GM12878 (cell line): ENCODE measurements at regions of chr2 and their contacts with region 1.

Region 1: GRCh38 chr2:98649135-98649991 is 41.0 kb downstream of the UNC50 start:
- DNase-seq: peak; percentile 54
- ATAC-seq: peak; percentile 97
- H3K4me3 ChIP-seq: no peak overlapping the region
- H3K27ac ChIP-seq: no peak overlapping the region
- H3K4me1 ChIP-seq: peaks cover 6% of the 10 kb centered on the region
- H3K27me3 ChIP-seq: no peaks in the 10 kb centered on the region
- CTCF ChIP-seq: peak; percentile 97 to 99 (median 99)
- EP300 ChIP-seq: no peak
- POLR2A ChIP-seq: no peak
- RAD21 ChIP-seq: peak; percentile 99

Region 2: DNA sequence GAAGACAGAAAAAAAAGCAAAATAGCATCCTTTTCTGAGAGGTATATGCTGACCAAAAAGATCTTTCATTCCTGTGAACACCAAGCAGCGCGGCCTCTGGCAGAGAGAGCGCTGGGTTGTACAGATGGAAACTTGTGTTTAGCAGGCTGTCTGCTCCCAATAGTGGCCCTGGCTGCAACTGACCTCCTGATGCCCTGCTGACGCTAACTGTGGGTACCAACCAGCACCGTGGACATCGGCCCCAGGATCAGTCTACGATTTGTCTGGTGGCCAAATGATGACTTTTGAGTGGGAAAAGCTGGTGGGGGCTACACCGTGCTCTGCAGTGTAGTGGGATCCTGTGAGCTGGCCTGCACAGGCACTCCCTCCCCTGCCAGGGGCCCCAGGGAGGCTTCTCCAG is 56.8 kb before region 1 on chr2:
- CTCF ChIA-PET with region 1: no interaction called
- POLR2A ChIA-PET with region 1: no interaction called
- RAD21 ChIA-PET with region 1: no interaction called
- SMC1A ChIA-PET with region 1: no interaction called
- in situ Hi-C with region 1: no loop called
- intact Hi-C with region 1: no loop called
- DNase-seq: no peak
- ATAC-seq: no peak
- H3K4me3 ChIP-seq: no peak overlapping the region
- H3K27ac ChIP-seq: no peak overlapping the region
- H3K4me1 ChIP-seq: no peaks in the 10 kb centered on the region
- H3K27me3 ChIP-seq: no peaks in the 10 kb centered on the region
- CTCF ChIP-seq: no peak
- EP300 ChIP-seq: no peak
- POLR2A ChIP-seq: no peak
- RAD21 ChIP-seq: no peak

Region 3: GRCh38 chr2:98709535-98709934 is 60.2 kb after region 1 on chr2:
- CTCF ChIA-PET with region 1: interaction called, 4 read pairs
- POLR2A ChIA-PET with region 1: interaction called, 5 read pairs
- RAD21 ChIA-PET with region 1: interaction called, 11 read pairs
- SMC1A ChIA-PET with region 1: interaction called, 4 read pairs
- in situ Hi-C with region 1: no loop called
- intact Hi-C with region 1: no loop called
- DNase-seq: no peak
- ATAC-seq: no peak
- H3K4me3 ChIP-seq: no peak overlapping the region
- H3K27ac ChIP-seq: no peak overlapping the region
- H3K4me1 ChIP-seq: peaks cover 18% of the 10 kb centered on the region
- H3K27me3 ChIP-seq: no peaks in the 10 kb centered on the region
- CTCF ChIP-seq: no peak
- EP300 ChIP-seq: no peak
- POLR2A ChIP-seq: no peak
- RAD21 ChIP-seq: no peak

Region 4: DNA sequence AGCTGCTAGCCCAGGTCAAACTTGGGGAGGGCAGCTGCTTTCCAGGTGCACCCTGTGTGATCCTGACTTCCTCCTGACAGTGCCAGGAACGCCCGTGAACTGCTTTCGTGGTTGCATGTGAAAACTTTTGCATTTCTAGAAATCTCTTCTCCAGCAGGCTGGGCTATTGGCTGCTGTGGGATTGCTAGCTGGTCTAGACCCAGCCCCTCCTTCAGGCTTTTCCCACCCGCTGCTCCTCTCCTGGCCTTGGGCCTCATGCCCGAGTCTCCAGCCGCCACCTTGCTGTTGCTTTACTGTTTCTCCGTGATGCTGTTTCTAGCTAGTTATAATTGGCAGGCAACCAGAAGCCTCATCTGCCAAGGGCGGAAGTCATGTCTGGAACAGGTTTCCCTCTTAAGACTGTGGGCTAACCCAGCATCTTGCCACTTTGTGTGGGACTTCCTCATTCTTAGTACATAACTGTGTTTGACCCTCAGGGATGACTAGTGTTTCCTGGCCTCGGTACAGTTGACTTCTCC is 108.6 kb after region 1 on chr2:
- CTCF ChIA-PET with region 1: interaction called, 9 read pairs
- POLR2A ChIA-PET with region 1: interaction called, 8 read pairs
- RAD21 ChIA-PET with region 1: interaction called, 9 read pairs
- SMC1A ChIA-PET with region 1: interaction called, 12 read pairs
- in situ Hi-C with region 1: no loop called
- intact Hi-C with region 1: no loop called
- DNase-seq: peak; percentile 81
- ATAC-seq: peak; percentile 89
- H3K4me3 ChIP-seq: 0 out of 2 replicates have a peak overlapping the region, but pooled peaks have one; percentile 17
- H3K27ac ChIP-seq: peak overlapping the region; percentile 35
- H3K4me1 ChIP-seq: peaks cover 40% of the 10 kb centered on the region
- H3K27me3 ChIP-seq: no peaks in the 10 kb centered on the region
- CTCF ChIP-seq: no peak
- EP300 ChIP-seq: peak in 1 of 2 experiments; percentile 29; a peak in 2 of 4 replicates
- POLR2A ChIP-seq: no peak
- RAD21 ChIP-seq: no peak

Region 5: GRCh38 chr2:98828793-98829371 is 179.5 kb after region 1 on chr2:
- CTCF ChIA-PET with region 1: interaction called, 124 read pairs
- POLR2A ChIA-PET with region 1: interaction called, 3 read pairs
- RAD21 ChIA-PET with region 1: interaction called, 4 read pairs
- SMC1A ChIA-PET with region 1: interaction called, 8 read pairs
- in situ Hi-C with region 1: no loop called
- intact Hi-C with region 1: no loop called
- DNase-seq: no peak
- ATAC-seq: no peak
- H3K4me3 ChIP-seq: no peak overlapping the region
- H3K27ac ChIP-seq: no peak overlapping the region
- H3K4me1 ChIP-seq: no peaks in the 10 kb centered on the region
- H3K27me3 ChIP-seq: no peaks in the 10 kb centered on the region
- CTCF ChIP-seq: no peak
- EP300 ChIP-seq: no peak
- POLR2A ChIP-seq: no peak
- RAD21 ChIP-seq: no peak

Region 6: DNA sequence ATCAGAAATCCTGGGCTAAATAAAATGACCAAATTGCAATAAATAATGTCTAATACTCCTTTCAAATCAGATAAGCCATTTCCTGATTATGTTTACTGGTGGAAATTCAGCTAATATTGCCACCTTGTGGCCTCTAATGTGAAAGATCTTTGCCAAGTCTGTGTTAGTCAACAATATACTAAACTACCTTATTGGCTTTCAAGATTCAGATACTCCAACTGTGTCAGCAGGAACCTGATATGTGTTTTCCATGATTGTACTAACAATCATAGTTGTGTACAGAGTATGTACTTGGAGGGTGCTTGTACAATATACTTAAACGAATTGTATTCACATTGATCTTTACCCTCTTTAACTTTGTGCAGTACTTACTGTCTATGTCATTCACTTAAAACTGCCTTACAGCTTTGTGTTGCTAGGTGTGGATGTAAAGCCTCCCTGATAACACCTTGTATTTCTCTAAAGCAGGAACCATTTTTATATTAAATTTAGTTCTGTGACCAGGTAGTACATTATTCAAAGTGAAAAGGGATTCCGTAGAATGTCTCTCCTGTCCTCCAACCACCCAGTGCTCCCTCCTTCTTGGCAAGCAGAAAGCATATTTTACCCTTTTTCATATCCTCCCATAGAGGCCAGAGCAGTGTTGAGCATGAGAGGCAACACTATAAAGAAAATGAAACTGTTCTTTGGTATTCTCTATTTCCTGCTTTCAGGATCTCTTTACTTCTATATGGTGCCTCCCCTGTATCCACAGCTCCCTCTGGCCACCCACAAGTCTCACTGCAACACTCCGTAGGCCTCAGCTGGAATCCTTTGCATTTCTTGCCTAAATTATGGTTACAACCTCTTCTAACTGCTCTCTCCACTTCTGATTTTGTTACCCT is 417.0 kb after region 1 on chr2:
- CTCF ChIA-PET with region 1: interaction called, 35 read pairs
- POLR2A ChIA-PET with region 1: no interaction called
- RAD21 ChIA-PET with region 1: interaction called, 35 read pairs
- SMC1A ChIA-PET with region 1: interaction called, 32 read pairs
- in situ Hi-C with region 1: loop called (anchors 5 kb)
- intact Hi-C with region 1: loop called (anchors 1 kb)
- DNase-seq: peak; percentile 64
- ATAC-seq: peak; percentile 98
- H3K4me3 ChIP-seq: 0 out of 2 replicates have a peak overlapping the region, but pooled peaks have one; percentile 21
- H3K27ac ChIP-seq: peak overlapping the region; percentile 69
- H3K4me1 ChIP-seq: peaks cover 10% of the 10 kb centered on the region; the same call in 1 of the 2 replicates
- H3K27me3 ChIP-seq: no peaks in the 10 kb centered on the region
- CTCF ChIP-seq: peak; percentile 51 to 68 (median 61); a peak in 5 of 6 replicates
- EP300 ChIP-seq: no peak
- POLR2A ChIP-seq: no peak
- RAD21 ChIP-seq: peak; percentile 83